Breast epithelium (tissue), 4 donors: ENCODE measurements at regions of chr11 and their contacts with region 1.

Region 1: DNA sequence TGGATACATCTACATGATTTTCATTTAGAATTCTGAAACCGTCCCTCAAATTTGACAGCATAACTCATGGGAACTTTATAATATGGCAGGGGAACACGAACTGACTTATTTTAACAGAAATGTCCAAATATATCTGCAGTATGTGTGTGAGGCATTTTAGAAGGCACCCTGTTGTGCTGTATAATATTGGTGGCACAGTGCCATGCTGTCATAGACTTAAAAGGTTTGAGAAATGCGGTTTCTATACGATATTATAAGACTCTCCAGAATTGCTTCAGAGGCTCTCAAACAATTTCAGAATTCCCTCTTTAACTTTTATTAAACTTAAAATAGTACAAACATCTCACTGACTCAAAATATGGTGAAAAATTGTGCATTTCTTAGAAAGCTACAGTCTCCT is 181.6 kb downstream of the MSANTD4 start:
- DNase-seq: no peak
- H3K4me3 ChIP-seq: no peak overlapping the region
- H3K27ac ChIP-seq: no peak overlapping the region
- H3K4me1 ChIP-seq: no peaks in the 10 kb centered on the region
- H3K27me3 ChIP-seq: no peaks in the 10 kb centered on the region
- CTCF ChIP-seq: no peak
- POLR2A ChIP-seq: no peak

Region 2: GRCh38 chr11:105878510-105878909 is 38.1 kb after region 1 on chr11:
- intact Hi-C with region 1: no loop called
- DNase-seq: no peak
- H3K4me3 ChIP-seq: no peak overlapping the region
- H3K27ac ChIP-seq: no peak overlapping the region
- H3K4me1 ChIP-seq: no peaks in the 10 kb centered on the region
- H3K27me3 ChIP-seq: no peaks in the 10 kb centered on the region
- CTCF ChIP-seq: no peak
- POLR2A ChIP-seq: no peak

Region 3: DNA sequence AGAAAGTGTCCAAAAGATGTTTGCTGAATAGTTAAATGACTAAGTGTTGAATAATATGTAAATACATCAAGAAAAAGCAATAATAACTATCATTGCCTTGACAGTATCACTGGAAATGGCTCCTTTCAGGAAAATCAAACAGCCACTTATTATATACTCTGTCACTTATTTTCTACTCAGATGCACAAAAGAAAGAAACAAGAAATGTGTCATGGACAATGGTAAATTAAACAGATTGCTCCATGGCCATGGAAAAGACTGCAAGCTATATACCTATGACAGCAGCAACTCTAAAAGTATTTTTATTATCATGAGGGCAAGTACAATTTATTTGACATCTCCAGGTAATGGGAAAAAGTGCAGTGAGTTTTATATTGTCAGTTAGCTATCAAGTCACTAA is 1230.7 kb after region 1 on chr11:
- intact Hi-C with region 1: loop called (anchors 5 kb)
- DNase-seq: no peak
- H3K4me3 ChIP-seq: no peak overlapping the region
- H3K27ac ChIP-seq: no peak overlapping the region
- H3K4me1 ChIP-seq: no peaks in the 10 kb centered on the region
- H3K27me3 ChIP-seq: no peaks in the 10 kb centered on the region
- CTCF ChIP-seq: no peak
- POLR2A ChIP-seq: no peak